HEK293T (cell line): ENCODE measurements at regions of chr2 and their contacts with region 1.

Region 1: GRCh38 chr2:191677646-191678436 is at the start of gene NABP1:
- DNase-seq: peak; percentile 97

Region 2: DNA sequence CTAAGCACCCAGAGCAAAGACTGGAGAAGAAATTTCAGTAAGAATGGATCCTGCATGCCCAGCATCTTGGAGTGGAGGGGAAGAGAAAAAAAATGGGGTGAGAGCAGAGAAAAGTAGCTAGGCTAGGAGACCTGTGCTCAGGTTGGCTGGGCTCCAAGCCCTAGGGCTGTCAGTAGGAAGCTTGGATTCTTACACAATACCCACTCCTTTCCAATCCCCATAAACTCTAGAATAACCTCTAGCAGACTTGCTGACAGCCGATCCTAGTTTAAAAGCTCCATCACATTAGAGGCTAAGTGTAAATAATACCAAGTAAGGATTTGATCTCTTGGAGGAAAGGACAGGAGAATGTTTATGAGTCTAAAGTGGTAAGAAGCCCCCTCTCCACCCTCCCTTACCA is 46.1 kb before region 1 on chr2:
- CTCF ChIA-PET with region 1: no interaction called
- POLR2A ChIA-PET with region 1: interaction called, 10 read pairs
- DNase-seq: peak; percentile 55

Region 3: DNA sequence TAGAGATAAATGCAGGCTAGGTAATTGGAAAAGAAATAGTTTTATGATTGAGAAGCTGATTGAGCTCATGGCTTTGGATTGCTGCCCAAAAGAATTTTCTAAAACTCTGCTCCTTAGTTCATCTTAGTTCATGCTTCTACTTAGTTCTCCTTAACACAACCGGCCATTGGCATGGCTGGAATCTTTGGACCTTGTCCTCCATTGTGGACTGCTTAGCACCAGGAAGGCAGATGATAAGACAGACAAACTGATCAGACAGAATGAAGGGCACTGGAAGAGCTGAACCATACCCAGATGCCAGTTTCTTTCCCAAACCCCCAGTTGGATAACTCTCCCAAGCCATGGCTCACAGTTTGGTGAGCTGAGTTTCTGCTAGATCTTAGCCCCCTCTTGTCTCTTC is 36.2 kb before region 1 on chr2:
- CTCF ChIA-PET with region 1: no interaction called
- POLR2A ChIA-PET with region 1: interaction called, 14 read pairs
- DNase-seq: no peak

Region 4: GRCh38 chr2:191797960-191798876 is 120.4 kb after region 1 on chr2:
- CTCF ChIA-PET with region 1: no interaction called
- POLR2A ChIA-PET with region 1: no interaction called
- DNase-seq: no peak